Psoas muscle (tissue), 8 donors: ENCODE measurements at regions of chr17 and their contacts with region 1.

Region 1: GRCh38 chr17:40443583-40444327 is 505 bp downstream of the IGFBP4 start:
- DNase-seq: peak; percentile 89 to 92
- ATAC-seq: peak; percentile 63 to 82 (median 76)
- H3K4me3 ChIP-seq: peak overlapping the region; percentile 78
- H3K27ac ChIP-seq: peak overlapping the region; percentile 75
- H3K4me1 ChIP-seq: peaks cover 11% of the 10 kb centered on the region
- H3K27me3 ChIP-seq: peaks cover 0 to 7% (median 0%) of the 10 kb centered on the region in 3 donors
- CTCF ChIP-seq: peak; percentile 37

Region 2: DNA sequence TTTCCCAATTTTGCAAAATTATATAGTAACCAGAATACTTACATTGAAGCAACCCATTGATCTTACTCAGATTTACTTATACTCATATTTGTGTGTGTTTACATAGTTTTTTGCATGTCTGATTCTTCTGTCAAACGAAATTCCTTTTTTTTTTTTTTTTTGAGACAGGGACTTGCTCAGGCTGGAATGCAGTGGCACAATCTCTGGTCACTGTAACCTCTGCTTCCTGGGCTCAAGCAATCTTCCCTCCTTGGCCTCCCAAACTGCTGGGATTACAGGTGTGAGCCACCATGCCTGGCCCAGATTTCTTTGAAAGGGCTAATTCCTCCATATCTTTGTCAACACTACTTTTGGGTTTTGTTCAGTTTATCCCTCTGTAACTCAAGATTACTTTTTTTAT is 56.1 kb before region 1 on chr17:
- intact Hi-C with region 1: no loop called
- DNase-seq: no peak
- ATAC-seq: no peak
- H3K4me3 ChIP-seq: no peak overlapping the region
- H3K27ac ChIP-seq: no peak overlapping the region
- H3K4me1 ChIP-seq: no peaks in the 10 kb centered on the region
- H3K27me3 ChIP-seq: no peaks in the 10 kb centered on the region
- CTCF ChIP-seq: no peak

Region 3: DNA sequence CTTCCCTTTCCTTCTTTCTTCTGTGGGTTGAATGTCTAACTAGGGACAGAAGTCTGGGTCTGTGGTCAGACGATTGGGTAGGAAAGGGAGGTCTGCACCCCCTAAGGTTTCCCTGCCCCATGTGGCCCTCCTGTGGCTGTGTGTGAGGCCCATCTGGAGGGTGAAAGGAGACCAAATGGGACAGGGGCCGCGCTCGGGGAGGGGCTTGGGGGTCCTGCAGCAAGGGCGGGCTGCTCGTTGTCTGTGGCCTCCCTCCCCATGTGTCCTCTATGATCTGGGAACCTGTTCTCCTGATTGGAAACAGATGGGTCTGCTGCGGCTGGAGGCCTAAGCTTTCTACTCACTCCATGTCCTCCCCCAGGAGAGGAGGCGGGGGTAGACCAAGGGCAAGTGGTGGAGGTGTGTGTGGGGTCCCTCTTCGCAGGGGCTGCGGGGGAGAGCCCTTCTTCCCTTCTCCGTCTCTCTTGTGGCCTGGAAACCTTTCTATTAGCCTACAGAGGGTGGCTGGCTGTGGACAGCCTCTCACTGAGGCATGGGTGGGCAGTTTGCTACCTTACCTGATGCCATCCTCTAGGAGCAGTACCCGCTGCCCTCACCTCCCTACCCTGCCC is 18.1 kb after region 1 on chr17:
- intact Hi-C with region 1: no loop called
- DNase-seq: no peak
- ATAC-seq: peak in 1 of 4 donors; percentile 10
- H3K4me3 ChIP-seq: no peak overlapping the region
- H3K27ac ChIP-seq: no peak overlapping the region
- H3K4me1 ChIP-seq: no peaks in the 10 kb centered on the region
- H3K27me3 ChIP-seq: peaks cover 0 to 5% (median 0%) of the 10 kb centered on the region in 3 donors
- CTCF ChIP-seq: no peak

Region 4: GRCh38 chr17:40479533-40480480 is 36.1 kb after region 1 on chr17:
- intact Hi-C with region 1: loop called (anchors 5 kb)
- DNase-seq: no peak
- ATAC-seq: no peak
- H3K4me3 ChIP-seq: no peak overlapping the region
- H3K27ac ChIP-seq: no peak overlapping the region
- H3K4me1 ChIP-seq: no peaks in the 10 kb centered on the region
- H3K27me3 ChIP-seq: no peaks in the 10 kb centered on the region
- CTCF ChIP-seq: no peak

Region 5: DNA sequence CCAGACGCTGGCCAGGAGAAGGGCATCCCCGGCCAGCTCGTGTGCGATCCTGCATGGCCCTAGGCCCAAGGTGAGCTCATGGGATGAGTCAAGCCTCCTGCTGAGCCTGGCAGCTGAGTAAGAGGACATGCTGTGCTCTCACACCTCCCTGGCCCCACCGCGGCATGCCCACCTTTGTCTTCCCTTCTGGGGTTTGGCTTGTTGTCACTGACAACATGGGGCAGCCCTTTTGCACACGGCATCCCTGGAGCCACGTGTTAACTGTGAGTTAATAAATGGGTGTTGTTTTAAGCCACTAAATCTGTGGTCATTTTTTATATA is 66.5 kb after region 1 on chr17:
- intact Hi-C with region 1: no loop called
- DNase-seq: peak; percentile 70 to 91
- ATAC-seq: peak; percentile 93 to 98 (median 96)
- H3K4me3 ChIP-seq: no peak overlapping the region
- H3K27ac ChIP-seq: peak overlapping the region; percentile 43
- H3K4me1 ChIP-seq: peaks cover 25% of the 10 kb centered on the region
- H3K27me3 ChIP-seq: no peaks in the 10 kb centered on the region
- CTCF ChIP-seq: no peak

Region 6: DNA sequence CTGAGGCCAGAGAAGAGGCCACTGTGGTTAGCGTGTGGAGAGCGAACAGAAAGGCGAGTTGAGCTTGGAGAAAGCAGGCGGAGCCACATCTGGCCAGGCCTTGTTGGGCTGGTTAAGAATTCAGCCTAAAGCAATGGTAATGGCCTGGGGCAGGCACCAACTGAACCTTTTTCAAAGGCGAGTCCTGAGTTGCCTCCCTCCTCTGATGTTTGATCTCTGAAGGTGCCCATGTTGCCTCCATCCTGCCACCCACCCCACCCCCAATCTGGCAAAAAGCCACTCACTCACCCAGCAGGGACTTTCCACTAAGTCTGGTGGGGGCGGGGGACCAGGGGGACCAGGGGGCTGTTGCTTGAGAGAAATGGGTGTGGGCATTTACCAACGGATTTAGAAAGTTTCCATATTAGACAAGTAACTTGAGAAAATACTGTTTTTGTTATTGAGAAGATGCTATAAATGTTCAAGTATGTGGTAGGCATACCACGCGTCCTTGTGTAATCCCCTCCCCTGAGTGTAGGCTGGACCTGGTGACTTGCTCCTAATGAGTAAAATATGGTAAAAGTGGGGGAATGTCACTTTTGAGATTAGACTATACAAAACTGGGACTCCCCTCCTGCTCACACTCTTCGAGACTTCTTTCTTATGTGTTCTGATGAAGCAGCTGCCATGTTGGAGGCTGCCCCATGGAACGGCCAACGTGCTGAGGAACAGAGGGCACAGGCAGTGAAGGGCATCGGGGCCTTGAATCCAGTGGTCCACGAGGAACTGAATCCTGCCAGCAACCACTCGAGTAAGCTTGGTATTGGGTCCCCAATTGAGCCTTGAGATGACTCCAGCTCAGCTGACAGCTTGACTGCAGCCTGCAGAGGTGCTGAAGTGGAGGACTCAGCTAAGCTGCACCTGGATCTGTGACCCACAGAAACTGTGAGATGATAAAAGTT is 87.6 kb after region 1 on chr17:
- intact Hi-C with region 1: loop called (anchors 2 to 5 kb)
- DNase-seq: no peak
- ATAC-seq: no peak
- H3K4me3 ChIP-seq: no peak overlapping the region
- H3K27ac ChIP-seq: no peak overlapping the region
- H3K4me1 ChIP-seq: peaks cover 5% of the 10 kb centered on the region
- H3K27me3 ChIP-seq: no peaks in the 10 kb centered on the region
- CTCF ChIP-seq: no peak

Region 7: GRCh38 chr17:40559954-40560591 is 116.3 kb after region 1 on chr17:
- intact Hi-C with region 1: loop called (anchors 2 to 5 kb)
- DNase-seq: peak; percentile 88 to 91
- ATAC-seq: peak; percentile 88 to 96 (median 92)
- H3K4me3 ChIP-seq: no peak overlapping the region
- H3K27ac ChIP-seq: peak overlapping the region; percentile 30
- H3K4me1 ChIP-seq: peaks cover 5% of the 10 kb centered on the region
- H3K27me3 ChIP-seq: peaks cover 0 to 15% (median 0%) of the 10 kb centered on the region in 3 donors
- CTCF ChIP-seq: peak; percentile 96